HCT116 (cell line): ENCODE measurements at regions of chr1 and their contacts with region 1.

Region 1: DNA sequence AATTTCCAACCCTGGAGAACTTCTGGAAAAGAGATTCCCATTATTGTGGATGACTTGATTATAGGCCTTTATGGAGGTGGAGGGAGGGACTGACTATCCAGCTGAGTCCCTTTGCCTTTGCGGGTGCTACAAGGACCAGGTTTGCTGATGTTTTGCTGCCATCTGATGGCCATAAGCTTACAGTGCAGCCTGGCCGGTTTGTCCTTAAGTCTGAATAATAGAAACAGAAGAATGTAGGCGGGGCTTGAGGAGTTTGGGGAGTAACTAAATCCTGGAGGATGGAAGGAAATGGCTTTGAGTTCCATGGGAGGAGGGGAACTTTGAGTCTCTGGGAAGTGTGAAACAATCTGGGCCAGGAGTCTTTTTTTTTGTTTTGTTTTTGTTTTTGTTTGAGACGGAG is 55.7 kb upstream of the CD1D start:
- DNase-seq: peak; percentile 89
- ATAC-seq: peak; percentile 92
- H3K4me3 ChIP-seq: no peak overlapping the region
- H3K27ac ChIP-seq: no peak overlapping the region
- H3K4me1 ChIP-seq: 0 out of 4 replicates have a peak, but pooled peaks cover 0 to 2% of the 10 kb centered on the region in 2 experiments
- H3K27me3 ChIP-seq: peaks cover 5% of the 10 kb centered on the region; the same call in 1 of the 2 replicates
- CTCF ChIP-seq: peak; percentile 94 to 96 (median 95)
- POLR2A ChIP-seq: no peak
- RAD21 ChIP-seq: peak; percentile 97

Region 2: DNA sequence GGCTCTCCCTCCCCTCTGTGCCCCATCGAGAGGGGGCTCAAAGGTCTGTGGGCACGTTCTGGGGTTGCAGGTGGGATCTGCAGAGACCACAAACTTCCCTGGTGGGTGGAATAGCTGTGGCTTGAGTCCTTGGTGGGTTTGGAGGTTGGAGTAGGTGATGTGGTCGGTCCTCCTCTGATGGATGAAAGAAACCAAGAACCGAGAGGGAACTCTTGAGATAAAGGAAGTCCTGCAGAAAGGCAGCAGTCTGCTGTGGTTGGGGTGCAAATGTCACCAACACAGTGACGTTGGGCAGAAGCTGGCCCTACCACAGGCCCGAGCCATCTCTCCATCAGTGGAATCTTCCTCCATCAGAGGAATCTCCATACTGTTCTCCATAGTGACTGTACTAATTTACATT is 744.5 kb before region 1 on chr1:
- CTCF ChIA-PET with region 1: no interaction called
- POLR2A ChIA-PET with region 1: no interaction called
- RAD21 ChIA-PET with region 1: no interaction called
- intact Hi-C with region 1: loop called (anchors 2 kb)
- DNase-seq: no peak
- ATAC-seq: no peak
- H3K4me3 ChIP-seq: no peak overlapping the region
- H3K27ac ChIP-seq: no peak overlapping the region
- H3K4me1 ChIP-seq: peaks cover 0 to 8% of the 10 kb centered on the region in 2 experiments; a peak in 2 of 4 replicates
- H3K27me3 ChIP-seq: peaks cover 42% of the 10 kb centered on the region
- CTCF ChIP-seq: no peak
- POLR2A ChIP-seq: no peak
- RAD21 ChIP-seq: no peak

Region 3: DNA sequence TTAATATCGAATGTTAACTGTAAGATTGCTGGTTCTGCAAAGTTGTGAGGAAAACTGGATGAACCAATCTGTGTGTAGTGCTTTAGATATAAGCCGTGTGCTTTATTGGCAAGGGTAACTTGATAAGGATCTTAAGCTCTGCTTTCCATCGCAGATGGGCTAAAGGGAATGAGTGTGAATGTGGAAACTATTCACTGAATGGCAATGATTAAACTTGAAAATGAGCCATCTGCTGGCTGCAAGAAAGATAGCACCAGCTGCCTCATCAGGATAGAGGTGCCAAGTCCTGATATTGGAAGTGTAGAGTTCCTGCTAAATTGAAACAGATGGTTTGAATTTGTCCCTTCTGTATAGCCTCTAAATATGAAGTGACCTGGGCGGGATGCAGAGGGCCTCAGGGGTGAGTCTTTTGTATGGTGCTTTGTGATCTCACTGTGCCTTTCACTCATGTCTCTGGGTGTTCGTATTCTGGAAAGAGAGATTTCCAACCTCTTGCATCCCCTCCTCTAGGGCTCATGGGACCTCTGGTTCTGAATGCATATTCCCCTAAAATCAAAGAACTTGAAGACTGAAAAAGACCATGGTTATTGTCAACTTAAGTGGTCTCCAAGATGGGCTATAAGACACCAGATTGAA is 433.6 kb before region 1 on chr1:
- CTCF ChIA-PET with region 1: interaction called, 5 read pairs
- POLR2A ChIA-PET with region 1: no interaction called
- RAD21 ChIA-PET with region 1: no interaction called
- intact Hi-C with region 1: loop called (anchors 10 kb)
- DNase-seq: peak; percentile 21
- ATAC-seq: peak; percentile 86
- H3K4me3 ChIP-seq: no peak overlapping the region
- H3K27ac ChIP-seq: no peak overlapping the region
- H3K4me1 ChIP-seq: no peaks in the 10 kb centered on the region
- H3K27me3 ChIP-seq: peaks cover 14% of the 10 kb centered on the region; the same call in 1 of the 2 replicates
- CTCF ChIP-seq: peak; percentile 43 to 64 (median 57)
- POLR2A ChIP-seq: no peak
- RAD21 ChIP-seq: peak; percentile 46

Region 4: DNA sequence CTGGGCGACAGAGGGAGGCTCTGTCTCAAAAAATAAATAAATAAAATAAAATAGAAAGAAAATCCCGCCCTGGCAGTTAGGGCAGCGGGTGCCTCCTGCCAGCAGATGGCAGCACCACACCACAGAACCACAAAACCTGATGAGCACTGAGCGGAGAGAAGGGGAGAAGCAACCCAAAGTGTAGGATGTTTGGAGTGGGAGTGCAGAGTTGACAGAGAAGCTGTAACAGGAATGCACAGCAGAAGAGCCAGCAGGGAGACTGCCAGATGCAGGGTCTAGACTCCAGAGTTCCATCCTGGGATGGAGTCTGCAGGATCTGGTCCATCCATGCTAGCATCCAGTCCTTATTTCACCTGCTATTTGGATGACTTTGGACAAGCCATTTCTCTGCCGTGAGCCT is 161.3 kb before region 1 on chr1:
- CTCF ChIA-PET with region 1: interaction called, 393 read pairs
- POLR2A ChIA-PET with region 1: interaction called, 7 read pairs
- RAD21 ChIA-PET with region 1: interaction called, 15 to 18 read pairs
- intact Hi-C with region 1: loop called (anchors 1 kb)
- DNase-seq: peak; percentile 39
- ATAC-seq: peak; percentile 88
- H3K4me3 ChIP-seq: no peak overlapping the region
- H3K27ac ChIP-seq: no peak overlapping the region
- H3K4me1 ChIP-seq: peaks cover 0 to 10% of the 10 kb centered on the region in 2 experiments; a peak in 2 of 4 replicates
- H3K27me3 ChIP-seq: peaks cover 25% of the 10 kb centered on the region
- CTCF ChIP-seq: peak; percentile 71 to 96 (median 80)
- POLR2A ChIP-seq: no peak
- RAD21 ChIP-seq: peak; percentile 95

Region 5: GRCh38 chr1:158087320-158087927 is 37.6 kb before region 1 on chr1:
- CTCF ChIA-PET with region 1: interaction called, 5 read pairs
- POLR2A ChIA-PET with region 1: no interaction called
- RAD21 ChIA-PET with region 1: interaction called in 1 of 2 experiments, 3 read pairs
- intact Hi-C with region 1: loop called (anchors 2 kb)
- DNase-seq: peak; percentile 70
- ATAC-seq: peak; percentile 96
- H3K4me3 ChIP-seq: no peak overlapping the region
- H3K27ac ChIP-seq: no peak overlapping the region
- H3K4me1 ChIP-seq: no peaks in the 10 kb centered on the region
- H3K27me3 ChIP-seq: no peaks in the 10 kb centered on the region
- CTCF ChIP-seq: peak; percentile 95 to 98 (median 97)
- POLR2A ChIP-seq: no peak
- RAD21 ChIP-seq: peak; percentile 90